Activated CD4-positive, alpha-beta T cell treated with anti-CD3 and anti-CD28 coated beads for 36 hours (primary cell): ENCODE measurements at regions of chr20 and their contacts with region 1.

Region 1: DNA sequence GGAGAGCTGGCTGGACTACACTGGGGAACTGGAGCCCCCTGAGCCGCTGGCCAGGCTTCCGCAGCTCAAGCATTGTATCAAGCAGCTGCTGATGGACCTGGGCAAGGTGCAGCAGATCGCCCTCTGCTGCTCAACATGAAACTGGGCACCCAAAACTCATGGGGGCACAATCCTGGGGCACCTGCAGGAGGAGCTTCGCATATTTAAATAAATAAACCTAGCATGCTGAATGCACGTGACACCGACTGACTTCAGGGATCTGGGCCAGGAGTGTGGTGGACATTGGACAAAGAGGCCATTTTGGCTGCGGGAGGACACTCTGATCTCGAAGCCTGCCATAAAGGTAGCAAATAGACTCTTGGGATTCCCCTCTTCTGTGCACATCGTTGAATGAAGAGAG is 6.8 kb downstream of the SCAND1 start:
- DNase-seq: peak; percentile 56
- ATAC-seq: peak; percentile 64
- H3K4me3 Mint-ChIP-seq: no peak overlapping the region
- H3K27ac Mint-ChIP-seq: no peak overlapping the region
- H3K4me1 Mint-ChIP-seq: peaks cover 9% of the 10 kb centered on the region
- H3K27me3 Mint-ChIP-seq: no peaks in the 10 kb centered on the region

Region 2: GRCh38 chr20:35523298-35523888 is 424.1 kb before region 1 on chr20:
- CTCF ChIA-PET with region 1: no interaction called
- POLR2A ChIA-PET with region 1: interaction called, 10 read pairs
- intact Hi-C with region 1: no loop called
- DNase-seq: peak; percentile 51
- ATAC-seq: peak; percentile 55
- H3K4me3 Mint-ChIP-seq: no peak overlapping the region
- H3K27ac Mint-ChIP-seq: no peak overlapping the region
- H3K4me1 Mint-ChIP-seq: no peaks in the 10 kb centered on the region
- H3K27me3 Mint-ChIP-seq: no peaks in the 10 kb centered on the region